Activated CD4-positive, alpha-beta memory T cell treated with anti-CD3 and anti-CD28 coated beads, Interleukin-2, amount 10 ng/mL, durations not matched to agents 7 days and 5 days (primary cell): ENCODE measurements at regions of chr9 and their contacts with region 1.

Region 1: GRCh38 chr9:128552153-128552743 is at the start of gene SPTAN1:
- DNase-seq: peak; percentile 96
- H3K4me3 Mint-ChIP-seq: peak within 1 kb of the TSS; percentile 94
- H3K27ac Mint-ChIP-seq: peak within 1 kb of the TSS; percentile 97
- H3K4me1 Mint-ChIP-seq: peaks cover 31% of the 10 kb centered on the region
- H3K27me3 Mint-ChIP-seq: no peaks in the 10 kb centered on the region
- total RNA-seq, gene SPTAN1: 313 to 321 TPM

Region 2: DNA sequence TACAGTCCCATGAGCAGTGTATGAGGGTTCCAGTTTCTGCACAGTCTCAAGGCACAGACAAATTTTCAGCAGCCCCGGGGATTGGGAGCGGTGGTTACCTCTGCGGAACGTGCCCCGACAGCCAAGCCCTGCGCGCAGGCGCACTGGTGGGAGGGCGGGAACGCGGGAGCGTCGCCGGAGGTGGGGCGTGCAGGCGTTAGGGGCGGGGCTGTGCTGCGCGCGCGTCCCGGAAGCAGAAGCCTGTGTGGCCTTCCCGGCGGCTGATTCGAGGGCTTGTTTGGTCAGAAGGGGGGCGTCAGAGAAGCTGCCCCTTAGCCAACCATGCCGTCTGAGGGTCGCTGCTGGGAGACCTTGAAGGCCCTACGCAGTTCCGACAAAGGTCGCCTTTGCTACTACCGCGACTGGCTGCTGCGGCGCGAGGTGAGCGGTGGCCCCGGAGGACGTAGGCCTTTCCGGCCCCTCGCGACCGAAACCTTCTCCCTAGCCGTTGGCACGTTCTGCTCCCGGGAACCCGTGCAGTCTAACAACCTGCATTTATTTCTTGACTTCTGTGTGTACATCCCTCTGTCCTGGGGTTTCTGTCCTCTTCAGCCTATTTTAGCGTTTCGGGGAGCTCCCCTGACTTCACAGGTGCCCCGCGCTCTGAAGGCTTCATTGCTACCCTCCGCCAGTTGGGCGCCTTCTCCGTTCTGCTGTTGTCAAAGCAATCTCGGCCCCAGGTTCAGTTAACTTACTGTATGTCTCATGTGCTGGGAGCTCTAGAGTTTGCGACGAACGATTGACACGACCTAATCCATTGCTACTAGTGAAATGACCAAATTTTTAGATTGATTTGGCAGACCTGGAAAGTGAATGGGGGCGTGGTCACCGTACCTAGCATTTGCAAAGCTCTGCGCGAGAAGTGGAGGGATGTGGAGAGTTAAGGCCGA is 47.5 kb before region 1 on chr9 and contains the start of gene GLE1:
- CTCF ChIA-PET with region 1: interaction called, 4 read pairs
- POLR2A ChIA-PET with region 1: interaction called, 89 read pairs
- DNase-seq: peak; percentile 96
- H3K4me3 Mint-ChIP-seq: peak within 1 kb of the TSS; percentile 99
- H3K27ac Mint-ChIP-seq: peak within 1 kb of the TSS; percentile 95
- H3K4me1 Mint-ChIP-seq: peaks cover 33% of the 10 kb centered on the region
- H3K27me3 Mint-ChIP-seq: no peaks in the 10 kb centered on the region
- total RNA-seq, gene GLE1: 50.3 to 50.7 TPM

Region 3: GRCh38 chr9:128528445-128529160 is 23.6 kb before region 1 on chr9:
- CTCF ChIA-PET with region 1: interaction called, 4 read pairs
- POLR2A ChIA-PET with region 1: interaction called, 11 read pairs
- DNase-seq: no peak
- H3K4me3 Mint-ChIP-seq: no peak overlapping the region
- H3K27ac Mint-ChIP-seq: no peak overlapping the region
- H3K4me1 Mint-ChIP-seq: no peaks in the 10 kb centered on the region
- H3K27me3 Mint-ChIP-seq: no peaks in the 10 kb centered on the region

Region 4: DNA sequence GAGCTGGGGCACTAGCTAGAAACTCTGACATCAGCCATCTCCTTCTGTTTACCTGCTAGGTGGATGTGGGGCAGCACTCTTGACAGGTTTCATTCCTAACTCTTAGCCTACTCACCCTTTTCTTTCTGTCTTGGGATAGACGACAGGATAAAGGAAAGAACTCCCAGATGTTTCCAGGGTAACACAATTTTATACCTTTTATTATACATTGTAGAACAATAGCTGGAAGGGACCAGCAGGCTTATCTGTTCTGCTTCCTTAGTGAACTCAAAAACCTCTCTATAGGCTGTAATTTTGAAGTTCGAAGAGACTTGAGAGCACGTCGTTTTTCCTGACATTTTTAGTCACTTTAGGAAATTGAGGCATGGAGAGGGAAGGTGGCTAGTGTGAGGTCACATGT is 13.3 kb after region 1 on chr9:
- CTCF ChIA-PET with region 1: no interaction called
- POLR2A ChIA-PET with region 1: interaction called, 16 read pairs
- DNase-seq: no peak
- H3K4me3 Mint-ChIP-seq: no peak overlapping the region
- H3K27ac Mint-ChIP-seq: no peak overlapping the region
- H3K4me1 Mint-ChIP-seq: peaks cover 8% of the 10 kb centered on the region
- H3K27me3 Mint-ChIP-seq: no peaks in the 10 kb centered on the region

Region 5: GRCh38 chr9:128688512-128689292 is 136.5 kb after region 1 on chr9 and contains the start of gene SET:
- CTCF ChIA-PET with region 1: no interaction called
- POLR2A ChIA-PET with region 1: interaction called, 27 read pairs
- DNase-seq: peak; percentile 95
- H3K4me3 Mint-ChIP-seq: peak within 1 kb of the TSS; percentile 98
- H3K27ac Mint-ChIP-seq: peak within 1 kb of the TSS; percentile 92
- H3K4me1 Mint-ChIP-seq: peaks cover 64% of the 10 kb centered on the region
- H3K27me3 Mint-ChIP-seq: no peaks in the 10 kb centered on the region
- total RNA-seq, gene SET: 355 to 379 TPM